AG04450 (cell line): ENCODE measurements at regions of chr1 and their contacts with region 1.

Region 1: DNA sequence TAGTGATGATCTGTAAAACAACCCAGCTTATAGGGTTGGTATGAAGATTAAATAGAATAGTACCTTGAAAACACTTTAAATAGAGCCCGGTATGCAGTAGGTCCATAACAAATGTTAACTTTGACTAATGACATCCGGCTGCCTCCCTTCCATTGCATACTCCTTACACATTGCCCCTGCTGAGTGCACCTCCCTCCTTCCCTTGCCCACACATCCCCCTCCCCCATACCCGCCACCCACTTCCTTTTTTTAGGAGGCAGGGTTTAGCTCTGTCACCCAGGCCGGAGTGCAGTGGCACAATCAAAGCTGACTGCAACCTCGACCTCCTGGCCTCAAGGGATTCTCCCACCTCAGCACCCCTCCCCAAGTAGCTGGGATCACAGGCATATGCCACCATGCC is 24.4 kb upstream of the ZC3H12A start:
- DNase-seq: no peak
- H3K4me3 ChIP-seq: no peak overlapping the region
- H3K27ac ChIP-seq: no peak overlapping the region
- H3K27me3 ChIP-seq: peaks cover 7% of the 10 kb centered on the region
- CTCF ChIP-seq: no peak

Region 2: GRCh38 chr1:37338658-37339057 is 111.3 kb before region 1 on chr1:
- CTCF ChIA-PET with region 1: no interaction called
- POLR2A ChIA-PET with region 1: no interaction called
- DNase-seq: no peak
- H3K4me3 ChIP-seq: no peak overlapping the region
- H3K27ac ChIP-seq: no peak overlapping the region
- H3K27me3 ChIP-seq: peaks cover 2% of the 10 kb centered on the region
- CTCF ChIP-seq: no peak

Region 3: GRCh38 chr1:37410815-37411214 is 39.1 kb before region 1 on chr1:
- CTCF ChIA-PET with region 1: no interaction called
- POLR2A ChIA-PET with region 1: no interaction called
- DNase-seq: no peak
- H3K4me3 ChIP-seq: no peak overlapping the region
- H3K27ac ChIP-seq: no peak overlapping the region
- H3K27me3 ChIP-seq: no peaks in the 10 kb centered on the region
- CTCF ChIP-seq: no peak

Region 4: DNA sequence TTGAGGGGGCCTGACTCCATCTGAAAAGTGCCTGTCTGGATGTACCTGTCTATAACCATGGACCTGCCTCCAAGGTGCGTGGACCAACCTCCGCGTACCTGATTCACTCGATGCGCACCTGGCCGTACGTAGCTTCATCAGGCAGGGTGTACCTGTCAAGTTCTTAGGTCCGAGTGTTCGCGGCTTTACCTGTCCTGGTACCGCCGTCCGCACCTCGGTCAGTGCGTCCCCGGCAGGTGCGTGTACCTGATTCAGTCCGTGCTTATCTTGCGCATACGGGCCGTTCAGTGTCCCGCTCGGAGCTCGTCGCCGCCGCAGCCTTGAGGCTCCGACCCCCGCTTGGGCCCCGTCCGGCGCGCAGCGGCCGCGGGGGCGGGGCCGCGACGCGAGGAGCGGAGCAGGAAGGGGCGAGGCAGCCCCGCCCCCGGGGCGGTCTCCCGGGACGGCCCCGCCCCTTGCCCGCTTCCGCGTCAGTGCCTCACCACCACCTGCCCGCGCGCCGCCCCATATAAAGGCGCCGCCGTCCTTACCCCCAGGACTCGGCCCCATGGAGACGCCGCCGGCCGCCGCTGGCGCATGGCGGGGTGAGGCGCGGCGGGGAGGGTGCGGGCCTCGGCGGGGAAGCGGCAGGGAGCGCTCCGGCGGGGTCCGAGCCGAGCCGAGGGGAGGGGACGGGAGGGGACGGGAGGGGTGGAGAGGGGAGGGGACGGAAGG is 24.3 kb after region 1 on chr1 and contains the start of gene ZC3H12A:
- CTCF ChIA-PET with region 1: interaction called, 41 read pairs
- POLR2A ChIA-PET with region 1: interaction called, 5 read pairs
- DNase-seq: peak; percentile 55
- H3K4me3 ChIP-seq: peak within 1 kb of the TSS; percentile 89
- H3K27ac ChIP-seq: peak within 1 kb of the TSS; percentile 75
- H3K27me3 ChIP-seq: no peaks in the 10 kb centered on the region
- CTCF ChIP-seq: no peak
- polyA plus RNA-seq, gene ZC3H12A: 4.3 and 6.4 TPM in 2 replicates